ENCODE measurements at regions of chr2 and their contacts with region 1.

Region 1: DNA sequence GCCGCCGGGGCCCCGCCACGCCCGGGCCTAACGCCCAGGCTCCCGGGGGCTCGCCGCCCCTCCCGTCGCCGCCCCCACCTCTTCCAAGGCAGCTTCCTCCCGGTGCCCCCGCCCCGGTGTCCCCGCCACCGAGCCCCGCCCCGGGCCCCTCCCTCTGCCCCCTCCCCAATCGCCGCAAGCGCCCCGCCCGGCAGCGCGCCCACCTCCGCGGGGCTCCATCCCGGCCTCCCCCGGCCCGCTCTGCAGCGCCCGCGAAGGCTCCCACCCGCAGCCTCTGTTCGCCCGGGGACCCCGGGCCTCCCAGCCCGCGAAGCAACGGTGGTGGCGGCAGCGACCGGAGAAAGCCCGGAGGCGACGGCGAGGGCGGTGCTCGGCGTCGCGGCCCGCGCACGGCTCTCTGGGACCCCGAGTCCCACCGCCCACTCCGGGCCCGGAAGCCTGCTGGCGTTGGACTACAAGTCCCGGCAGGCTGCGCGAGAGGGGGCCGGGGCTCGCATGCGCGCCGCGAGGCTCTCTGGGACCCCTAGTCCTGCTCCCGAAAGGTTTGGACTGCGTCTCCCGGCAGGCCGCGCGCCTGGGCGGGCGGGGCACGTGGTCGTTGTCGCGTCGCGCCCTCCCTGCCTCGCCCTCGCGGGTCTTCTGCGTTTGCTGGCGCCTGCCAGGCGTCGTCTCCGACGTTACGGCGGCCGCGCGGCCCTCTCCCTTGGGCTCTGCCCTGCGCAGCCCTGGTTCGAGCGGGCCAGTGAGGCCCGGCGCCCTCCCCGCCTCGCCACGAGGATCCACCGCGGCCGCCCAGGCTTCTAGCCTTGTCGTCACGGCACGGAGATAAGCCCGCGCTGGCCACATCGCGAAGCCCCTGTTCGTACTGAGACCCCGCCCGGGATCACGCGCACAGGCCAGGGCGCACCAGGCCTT is at the start of gene STK25:
- DNase-seq: peak; percentile 99
- H3K4me3 Mint-ChIP-seq: peak within 1 kb of the TSS; percentile 87
- H3K27ac Mint-ChIP-seq: peak within 1 kb of the TSS; percentile 72
- H3K4me1 Mint-ChIP-seq: peaks cover 13% of the 10 kb centered on the region
- H3K27me3 Mint-ChIP-seq: peaks cover 7% of the 10 kb centered on the region
- total RNA-seq, gene STK25: 121 and 145 TPM in 2 replicates

Region 2: DNA sequence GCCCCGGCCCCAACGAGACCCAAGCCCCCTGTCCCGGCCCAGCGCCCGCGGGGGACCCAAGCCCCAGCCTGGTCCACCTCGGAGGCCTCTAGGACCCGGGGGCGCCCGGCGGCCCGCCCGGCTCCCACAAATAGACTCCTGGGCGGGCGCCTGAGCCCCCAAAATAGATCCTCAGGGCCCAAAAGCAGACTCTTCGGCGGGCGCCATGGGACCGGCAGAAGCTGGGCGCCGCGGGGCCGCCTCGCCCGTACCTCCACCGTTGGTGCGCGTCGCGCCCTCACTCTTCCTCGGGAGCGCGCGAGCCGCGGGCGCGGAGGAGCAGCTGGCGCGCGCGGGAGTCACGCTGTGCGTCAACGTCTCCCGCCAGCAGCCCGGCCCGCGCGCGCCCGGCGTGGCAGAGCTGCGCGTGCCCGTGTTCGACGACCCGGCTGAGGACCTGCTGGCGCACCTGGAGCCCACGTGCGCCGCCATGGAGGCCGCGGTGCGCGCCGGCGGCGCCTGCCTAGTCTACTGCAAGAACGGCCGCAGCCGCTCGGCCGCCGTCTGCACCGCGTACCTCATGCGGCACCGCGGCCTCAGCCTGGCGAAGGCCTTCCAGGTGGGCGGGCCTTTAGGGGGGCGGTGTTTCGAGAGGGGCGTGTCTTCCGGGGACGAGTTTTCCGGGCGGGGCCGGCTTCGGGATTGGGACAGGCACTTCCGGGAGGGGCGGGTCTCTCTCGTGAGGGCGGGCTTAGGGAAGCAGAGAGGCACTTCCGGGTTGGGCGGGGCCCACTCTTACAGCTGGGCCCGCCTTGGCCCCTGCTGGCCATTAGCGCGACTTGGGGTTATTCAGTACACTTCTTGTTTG is 947.8 kb before region 1 on chr2:
- intact Hi-C with region 1: loop called (anchors 2 kb)
- DNase-seq: peak; percentile 100
- H3K4me3 Mint-ChIP-seq: peak overlapping the region; percentile 94
- H3K27ac Mint-ChIP-seq: peak overlapping the region; percentile 94
- H3K4me1 Mint-ChIP-seq: peaks cover 63% of the 10 kb centered on the region
- H3K27me3 Mint-ChIP-seq: no peaks in the 10 kb centered on the region

Region 3: DNA sequence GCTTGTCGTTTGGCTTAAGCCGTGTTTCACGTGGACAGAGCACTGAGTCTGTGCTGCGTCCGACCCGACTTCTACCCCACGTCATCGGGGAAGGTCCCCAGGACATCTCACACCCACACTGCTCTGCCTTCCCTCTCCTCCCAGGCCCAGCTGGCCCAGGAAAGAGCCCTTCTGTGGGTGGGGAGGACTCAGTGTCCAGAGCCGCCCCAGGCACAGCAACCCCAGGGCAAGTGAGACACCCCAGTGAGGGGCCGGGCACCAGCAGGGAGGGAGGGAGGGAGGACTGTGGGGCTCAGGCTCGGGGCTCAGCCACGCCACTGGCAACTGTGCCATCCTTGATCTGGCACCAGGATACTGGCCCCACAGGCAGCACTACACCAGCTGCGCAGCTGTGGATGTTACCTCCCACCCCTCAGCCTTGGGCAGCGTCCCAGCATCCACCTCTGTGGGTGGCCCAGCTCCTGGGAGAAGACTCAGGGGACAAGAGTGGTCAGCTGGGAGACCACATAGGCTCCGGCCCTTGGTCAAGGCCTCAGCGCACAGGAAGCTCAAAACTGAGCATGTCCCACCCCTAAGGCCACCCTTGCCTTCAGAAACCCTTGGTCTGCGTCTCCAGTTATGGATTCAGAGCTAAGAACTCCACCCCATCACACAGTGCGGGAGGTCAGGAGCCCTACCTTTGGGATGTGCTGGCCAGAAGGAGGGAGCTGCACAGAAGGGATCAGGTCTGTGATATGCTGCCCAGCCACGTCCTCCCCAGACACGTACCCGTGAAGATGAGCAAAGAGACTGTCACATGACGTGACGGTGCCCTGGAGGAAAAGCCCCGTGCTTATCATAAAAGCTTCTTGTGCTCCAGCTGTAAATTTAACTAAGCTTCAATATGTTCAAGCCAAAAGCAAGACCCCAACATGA is 371.0 kb before region 1 on chr2:
- intact Hi-C with region 1: no loop called
- DNase-seq: no peak
- H3K4me3 Mint-ChIP-seq: no peak overlapping the region
- H3K27ac Mint-ChIP-seq: no peak overlapping the region
- H3K4me1 Mint-ChIP-seq: peaks cover 3% of the 10 kb centered on the region
- H3K27me3 Mint-ChIP-seq: no peaks in the 10 kb centered on the region

Region 4: GRCh38 chr2:241355983-241356870 is 152.3 kb before region 1 on chr2 and contains the start of gene FARP2:
- intact Hi-C with region 1: loop called (anchors 1 kb)
- DNase-seq: peak; percentile 98
- H3K4me3 Mint-ChIP-seq: peak within 1 kb of the TSS; percentile 79
- H3K27ac Mint-ChIP-seq: peak within 1 kb of the TSS; percentile 76
- H3K4me1 Mint-ChIP-seq: peaks cover 33% of the 10 kb centered on the region
- H3K27me3 Mint-ChIP-seq: no peaks in the 10 kb centered on the region
- total RNA-seq, gene FARP2: 36.5 and 43.1 TPM in 2 replicates

Region 5: GRCh38 chr2:241540771-241541561 is 32.5 kb after region 1 on chr2:
- intact Hi-C with region 1: loop called (anchors 1 kb)
- DNase-seq: peak; percentile 90
- H3K4me3 Mint-ChIP-seq: peak overlapping the region; percentile 75
- H3K27ac Mint-ChIP-seq: no peak overlapping the region
- H3K4me1 Mint-ChIP-seq: no peaks in the 10 kb centered on the region
- H3K27me3 Mint-ChIP-seq: peaks cover 17% of the 10 kb centered on the region

Region 6: GRCh38 chr2:241637000-241637791 is 128.7 kb after region 1 on chr2 and contains the starts of genes ATG4B and THAP4:
- intact Hi-C with region 1: loop called (anchors 1 kb)
- DNase-seq: peak; percentile 95
- H3K4me3 Mint-ChIP-seq: peak within 1 kb of the TSS; percentile 89
- H3K27ac Mint-ChIP-seq: peak within 1 kb of the TSS; percentile 93
- H3K4me1 Mint-ChIP-seq: peaks cover 41% of the 10 kb centered on the region
- H3K27me3 Mint-ChIP-seq: no peaks in the 10 kb centered on the region
- total RNA-seq, gene ATG4B: 109 and 115 TPM in 2 replicates
- total RNA-seq, gene THAP4: 62.0 and 63.9 TPM in 2 replicates

Measured in activated CD4-positive, alpha-beta T cell treated with anti-CD3 and anti-CD28 coated beads, Interleukin-2, amount 10 ng/mL, durations not matched to agents 24 days and 14 days (primary cell).